ENCODE measurements at regions of chr11 and their contacts with region 1.

Region 1: DNA sequence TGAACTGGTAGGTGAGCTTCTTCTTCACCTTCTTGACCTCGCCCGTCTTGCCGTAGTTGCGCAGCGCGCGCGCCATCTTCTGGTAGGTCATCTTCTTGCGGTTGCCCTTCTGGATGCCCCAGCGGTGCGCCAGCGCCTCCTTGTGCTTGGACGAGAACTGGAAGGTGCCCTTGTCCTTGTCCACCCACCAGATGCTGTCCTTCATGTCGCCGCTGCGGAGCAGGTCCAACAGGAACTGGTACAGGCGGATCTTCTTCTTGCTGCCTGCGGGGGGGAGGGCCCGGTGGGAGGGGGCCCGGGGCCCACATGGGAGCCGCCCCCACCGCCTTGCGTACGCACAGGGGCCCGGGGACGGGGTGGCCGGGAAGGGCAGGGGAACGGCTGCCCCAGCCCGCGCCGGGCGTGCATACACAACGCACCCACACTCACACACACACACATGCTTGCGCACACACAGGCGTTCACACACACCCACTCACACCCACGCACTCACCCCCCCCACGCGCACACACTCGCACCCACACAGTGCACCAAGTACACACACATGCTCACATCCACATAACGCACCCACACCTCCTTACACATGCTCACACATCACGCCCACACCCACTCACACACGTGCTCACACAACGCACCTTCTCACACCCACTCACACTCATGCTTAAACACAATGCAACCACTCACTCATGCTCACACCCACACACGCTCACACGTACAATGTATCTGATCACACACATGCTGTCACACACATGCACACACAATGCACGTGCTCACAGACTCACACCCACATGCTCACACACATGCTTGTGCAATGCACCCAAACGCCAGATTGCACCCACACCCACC is 3.0 kb upstream of the MYBPC3 start:
- DNase-seq: peak; percentile 96

Region 2: DNA sequence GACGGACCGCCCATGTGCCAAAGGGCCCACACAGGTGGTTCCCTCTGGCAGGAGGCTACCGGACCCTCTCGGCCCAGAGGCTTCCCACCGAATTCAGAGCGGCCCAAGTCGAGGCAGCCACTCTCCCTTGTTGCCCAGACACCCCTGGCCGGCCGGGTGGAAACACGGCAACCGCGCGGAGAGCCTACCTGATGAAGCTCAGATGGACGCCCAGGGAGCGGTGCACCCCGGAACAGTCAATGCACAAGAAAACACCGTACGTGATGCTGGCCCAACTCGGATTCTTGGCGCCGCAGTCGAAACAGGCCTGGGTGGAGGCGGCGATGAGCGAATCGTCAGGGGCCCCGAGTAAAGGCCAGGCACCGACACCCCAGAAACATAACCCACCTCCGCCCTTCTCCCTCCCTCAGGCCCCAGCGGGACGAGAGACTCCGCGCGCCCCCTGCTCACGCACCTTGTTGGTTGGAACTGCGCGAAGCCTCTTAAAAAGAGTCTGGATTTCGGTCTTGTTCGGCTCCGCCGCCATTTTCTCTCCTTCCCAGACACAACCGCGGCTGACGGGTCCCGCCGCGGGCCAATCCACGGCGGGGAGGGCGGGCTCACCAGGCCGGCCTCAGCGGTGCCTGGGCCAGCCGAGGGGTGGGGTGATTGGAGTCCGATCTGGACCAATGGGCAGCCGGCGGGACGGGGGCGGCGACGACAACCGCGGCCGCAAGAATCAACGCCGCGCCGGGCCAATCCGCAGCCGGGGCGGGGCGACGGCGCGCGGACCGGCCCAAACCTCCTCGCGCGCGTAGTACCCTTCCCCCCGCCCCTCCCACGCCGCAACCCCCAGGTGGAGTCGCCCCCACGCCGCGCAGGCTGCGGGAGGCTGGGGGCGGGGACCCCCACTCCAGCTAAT is 178.9 kb before region 1 on chr11 and contains the start of gene ARFGAP2:
- intact Hi-C with region 1: loop called (anchors 5 to 10 kb)
- DNase-seq: peak; percentile 99
- total RNA-seq, gene ARFGAP2: 49.4 to 58.5 TPM

Region 3: DNA sequence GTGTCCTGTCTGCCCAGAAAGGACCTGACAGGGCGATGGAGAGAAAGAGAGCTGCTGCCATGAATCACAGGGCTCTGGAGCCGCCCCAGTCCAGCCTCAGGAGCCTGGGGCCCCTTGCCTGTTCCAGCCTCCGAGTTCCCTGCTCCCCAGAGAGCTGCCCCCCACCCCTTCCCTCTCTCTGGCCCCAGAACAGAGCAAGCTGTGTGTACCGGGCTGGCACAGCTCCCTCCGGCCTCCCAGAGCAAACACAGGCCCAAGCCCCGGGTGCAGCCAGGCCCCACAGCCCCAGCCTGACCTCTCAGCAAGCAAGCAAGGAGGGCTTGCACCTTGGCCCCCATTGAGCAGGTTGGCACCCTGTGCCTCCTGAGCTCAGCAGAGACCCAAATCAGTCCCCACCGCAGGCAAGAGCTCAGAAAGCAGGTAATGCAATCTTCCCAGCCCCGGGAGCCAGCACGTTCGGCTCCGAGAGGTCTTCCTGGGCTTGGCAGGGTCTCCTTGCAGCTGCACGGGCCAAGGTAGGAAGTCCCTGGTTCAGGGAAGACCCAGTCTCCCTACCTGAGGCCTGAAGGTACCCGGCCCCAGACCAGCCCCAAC is 170.7 kb before region 1 on chr11:
- intact Hi-C with region 1: loop called in 1 of 2 experiments (anchors 5 kb)
- DNase-seq: no peak

Region 4: DNA sequence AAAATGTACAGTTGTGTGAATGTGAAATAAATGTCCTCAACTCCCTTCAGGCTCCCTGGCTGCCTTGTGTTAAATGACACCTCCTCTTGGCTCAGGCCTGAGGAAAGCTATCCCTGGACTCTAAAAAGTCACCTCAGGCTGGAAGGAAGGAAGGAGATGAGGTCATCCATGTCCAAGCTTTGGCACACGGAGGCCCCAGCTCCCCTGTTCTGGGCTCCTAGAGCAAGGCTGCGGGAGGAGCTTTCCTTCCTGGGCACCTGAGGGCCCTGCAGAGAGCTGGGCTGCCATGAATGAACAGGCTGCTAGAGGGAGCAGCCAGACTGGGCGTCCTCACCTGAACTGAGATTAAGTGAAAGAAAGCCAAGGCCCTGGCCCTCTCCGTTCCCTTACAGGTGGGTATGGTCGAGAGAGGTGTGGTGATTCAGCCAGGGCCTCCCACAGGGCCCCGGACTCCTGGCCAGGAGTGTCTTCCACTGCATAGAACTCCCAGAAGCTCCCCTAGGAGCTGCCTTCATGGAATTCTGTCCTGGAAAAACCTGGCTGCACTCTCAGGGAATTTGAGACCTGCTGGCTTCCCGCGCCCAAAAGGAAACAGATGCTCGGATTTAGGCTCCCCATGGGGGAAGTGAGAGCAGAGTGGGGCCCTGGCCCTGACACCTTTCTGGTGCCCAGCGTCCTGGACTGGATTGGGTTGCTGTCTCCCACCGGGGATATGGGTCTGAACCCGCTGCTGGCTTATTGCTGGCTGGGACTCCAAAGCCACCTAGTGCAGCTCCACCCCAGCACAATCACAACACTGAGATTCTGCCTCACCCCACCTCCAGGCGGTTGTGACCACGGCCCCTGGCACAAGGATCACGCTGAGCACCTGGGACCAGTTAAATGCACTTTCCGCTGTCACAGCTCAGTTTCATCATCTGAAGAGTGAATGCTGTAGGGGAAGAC is 25.2 kb before region 1 on chr11:
- intact Hi-C with region 1: no loop called
- DNase-seq: no peak

Measured in posterior vena cava (tissue), 2 donors.